ENCODE measurements at regions of chr17 and their contacts with region 1.

Region 1: DNA sequence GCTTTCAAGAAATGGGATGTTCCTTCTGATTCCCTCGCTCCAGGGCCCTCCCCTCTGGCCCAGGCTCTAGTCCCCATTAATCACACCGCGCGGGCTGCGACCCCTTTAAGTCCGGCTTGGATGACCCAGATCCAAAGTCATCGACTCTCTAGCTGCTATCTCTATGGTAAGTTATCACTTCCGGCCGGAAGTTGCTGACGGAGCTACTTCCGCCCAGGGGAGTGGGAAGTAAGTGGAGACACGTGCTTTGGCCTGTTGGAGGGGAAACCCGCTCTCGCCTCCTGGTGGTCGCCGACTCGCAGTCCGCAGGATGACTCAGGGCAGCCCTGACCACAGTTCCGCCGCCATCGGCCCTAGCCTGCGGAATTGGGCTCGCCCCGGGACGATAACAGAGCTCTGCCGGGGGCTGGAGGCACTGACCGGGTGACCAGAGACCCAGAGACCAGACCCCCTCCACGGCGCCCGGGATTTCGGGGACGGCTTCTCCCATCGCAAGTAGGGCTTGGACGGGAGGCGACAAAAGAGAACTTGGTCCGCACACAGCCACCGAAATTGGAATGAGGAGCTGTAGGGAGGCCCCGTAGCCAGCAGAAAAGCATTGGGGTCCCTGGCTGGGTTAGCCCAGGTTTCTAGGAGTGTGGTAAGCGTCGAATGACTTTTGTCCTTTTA is 52.2 kb upstream of the SEC14L1 start:
- DNase-seq: peak; percentile 99

Region 2: DNA sequence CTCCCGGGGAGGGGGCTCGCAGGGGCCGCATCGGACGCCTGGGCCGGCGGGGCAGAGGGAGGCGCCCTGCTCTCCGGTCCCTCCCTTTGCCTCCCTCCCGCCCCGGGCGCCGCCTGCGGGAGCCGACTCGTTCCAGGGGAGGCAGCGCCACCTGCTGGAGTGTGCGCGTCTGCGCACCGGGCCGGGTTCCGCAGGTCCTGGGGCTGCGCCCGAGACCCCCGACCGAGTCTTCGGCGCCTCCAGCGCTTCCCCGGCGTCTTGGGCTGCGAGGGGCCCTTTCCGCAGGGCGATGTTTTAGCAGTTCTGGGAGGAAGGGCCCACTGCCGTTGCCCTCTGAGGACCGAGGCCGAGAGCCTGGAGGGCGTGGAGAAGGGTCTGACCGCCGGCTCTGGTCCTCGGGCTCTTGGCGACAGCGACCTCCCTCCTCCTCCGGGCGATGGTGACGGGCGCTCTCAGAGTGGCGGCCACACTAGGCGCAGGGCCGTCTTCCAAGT is 158.5 kb after region 1 on chr17:
- intact Hi-C with region 1: loop called (anchors 2 to 5 kb)
- DNase-seq: peak; percentile 96